Left ventricle myocardium inferior (tissue), 1 donor: ENCODE measurements at regions of chr17 and their contacts with region 1.

Region 1: GRCh38 chr17:43467981-43468581 is 15.7 kb upstream of the DHX8 start:
- DNase-seq: no peak
- H3K4me3 ChIP-seq: no peak overlapping the region
- H3K27ac ChIP-seq: peak overlapping the region; percentile 12
- H3K4me1 ChIP-seq: peaks cover 19% of the 10 kb centered on the region
- H3K27me3 ChIP-seq: peaks cover 4% of the 10 kb centered on the region
- CTCF ChIP-seq: no peak

Region 2: GRCh38 chr17:43418441-43419374 is 49.4 kb before region 1 on chr17:
- intact Hi-C with region 1: loop called (anchors 5 kb)
- DNase-seq: peak; percentile 38
- H3K4me3 ChIP-seq: no peak overlapping the region
- H3K27ac ChIP-seq: peak overlapping the region; percentile 76
- H3K4me1 ChIP-seq: peaks cover 26% of the 10 kb centered on the region
- H3K27me3 ChIP-seq: peaks cover 2% of the 10 kb centered on the region
- CTCF ChIP-seq: no peak